Caco-2 (cell line): ENCODE measurements at regions of chr6 and their contacts with region 1.

Region 1: GRCh38 chr6:73969971-73970970 is 274.3 kb downstream of the CD109 start:
- DNase-seq: peak in 1 of 2 experiments; percentile 48
- H3K4me3 ChIP-seq: no peak overlapping the region
- H3K4me3 Mint-ChIP-seq: no peak overlapping the region
- H3K27ac Mint-ChIP-seq: no peak overlapping the region
- H3K4me1 ChIP-seq: no peaks in the 10 kb centered on the region
- H3K4me1 Mint-ChIP-seq: no peaks in the 10 kb centered on the region
- H3K27me3 ChIP-seq: no peaks in the 10 kb centered on the region
- H3K27me3 Mint-ChIP-seq: peaks cover 3% of the 10 kb centered on the region
- CTCF ChIP-seq: peak; percentile 51 to 64

Region 2: DNA sequence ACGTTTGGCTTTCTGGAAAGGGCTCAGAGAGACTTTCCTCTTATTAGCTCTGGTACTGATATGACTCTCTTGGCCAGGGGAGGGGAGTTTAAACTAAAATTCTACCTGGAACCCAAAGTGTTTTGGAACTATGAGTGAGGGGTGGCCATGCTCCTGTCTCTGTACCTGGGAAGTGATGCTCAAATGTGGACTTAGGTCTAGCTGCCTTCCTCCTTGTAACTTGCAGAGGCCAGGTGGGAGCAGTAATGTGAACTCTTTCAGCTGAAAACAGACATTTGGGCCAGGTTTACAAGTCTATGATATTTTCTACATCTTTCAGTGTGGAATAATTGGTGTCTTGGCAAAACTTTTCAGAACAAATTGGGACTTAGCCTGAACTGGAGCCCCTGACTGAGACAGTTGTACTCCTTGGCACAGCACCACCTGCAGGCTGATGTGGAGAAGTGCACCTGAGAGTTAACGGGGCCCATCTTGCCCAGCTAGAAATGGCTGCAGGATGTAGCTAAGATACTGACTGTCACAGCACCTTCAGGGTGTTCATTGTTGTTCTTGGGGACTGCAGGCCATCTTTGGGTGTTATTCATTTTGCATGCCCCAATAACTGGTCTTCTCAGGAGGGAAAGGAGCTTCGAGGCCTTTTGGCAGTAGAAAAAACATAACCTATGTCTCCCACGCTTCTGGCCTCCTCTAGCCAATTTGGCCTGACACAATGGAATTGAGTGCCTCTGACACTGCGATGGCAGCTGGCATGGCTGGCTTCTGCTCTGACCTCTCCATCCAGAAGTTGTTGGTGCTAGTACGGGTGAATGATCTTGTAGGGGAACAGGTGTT is 237.2 kb before region 1 on chr6:
- CTCF ChIA-PET with region 1: no interaction called
- POLR2A ChIA-PET with region 1: no interaction called
- intact Hi-C with region 1: loop called (anchors 10 kb)
- DNase-seq: peak; percentile 62 to 72
- H3K4me3 ChIP-seq: no peak overlapping the region
- H3K4me3 Mint-ChIP-seq: no peak overlapping the region
- H3K27ac Mint-ChIP-seq: no peak overlapping the region
- H3K4me1 ChIP-seq: no peaks in the 10 kb centered on the region
- H3K4me1 Mint-ChIP-seq: no peaks in the 10 kb centered on the region
- H3K27me3 ChIP-seq: no peaks in the 10 kb centered on the region
- H3K27me3 Mint-ChIP-seq: peaks cover 3% of the 10 kb centered on the region
- CTCF ChIP-seq: peak; percentile 87 to 92

Region 3: DNA sequence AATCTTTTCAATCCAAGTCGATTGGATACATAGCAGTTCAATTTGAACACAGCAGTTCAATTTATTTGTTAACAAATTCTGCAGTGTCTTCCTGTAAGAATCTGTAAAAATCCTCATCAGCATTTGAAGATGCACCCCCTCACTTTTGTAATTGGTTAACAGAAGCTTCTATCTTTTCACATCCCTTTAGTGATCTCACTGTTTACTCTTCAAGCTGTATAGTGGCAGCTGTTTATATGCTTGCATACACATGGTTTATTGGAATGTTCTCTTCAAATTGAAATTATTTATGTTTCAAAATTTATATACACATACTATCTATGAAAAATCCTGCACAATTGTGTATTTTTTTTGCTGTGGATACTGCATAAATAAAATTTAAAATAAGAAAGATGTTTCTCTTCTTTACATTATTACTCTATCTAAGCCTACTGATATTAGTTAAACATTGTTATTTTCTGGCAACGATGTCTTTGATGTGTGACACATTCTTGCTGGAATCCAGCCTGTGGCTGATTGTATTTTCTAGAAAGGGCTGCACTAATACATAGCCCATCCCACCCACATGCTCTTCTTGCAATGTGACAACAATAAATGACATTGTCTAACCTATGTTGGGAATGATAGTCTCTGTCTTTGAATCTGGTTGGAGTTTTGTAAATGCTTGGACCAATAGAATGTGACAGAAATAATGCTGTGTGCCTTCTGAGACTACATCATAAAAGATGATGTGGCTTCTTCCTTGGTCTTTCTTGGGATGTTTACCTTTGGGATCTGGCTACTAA is 298.7 kb after region 1 on chr6:
- CTCF ChIA-PET with region 1: no interaction called
- POLR2A ChIA-PET with region 1: no interaction called
- intact Hi-C with region 1: no loop called
- DNase-seq: no peak
- H3K4me3 ChIP-seq: no peak overlapping the region
- H3K4me3 Mint-ChIP-seq: no peak overlapping the region
- H3K27ac Mint-ChIP-seq: peak overlapping the region; percentile 12
- H3K4me1 ChIP-seq: peaks cover 12% of the 10 kb centered on the region; the same call in 1 of the 2 replicates
- H3K4me1 Mint-ChIP-seq: peaks cover 6% of the 10 kb centered on the region
- H3K27me3 ChIP-seq: no peaks in the 10 kb centered on the region
- H3K27me3 Mint-ChIP-seq: no peaks in the 10 kb centered on the region
- CTCF ChIP-seq: no peak